Endothelial cell of umbilical vein (primary cell): ENCODE measurements at regions of chr6 and their contacts with region 1.

Region 1: GRCh38 chr6:12313992-12314805 is 24.0 kb downstream of the EDN1 start:
- DNase-seq: peak; percentile 89
- H3K4me3 ChIP-seq: no peak overlapping the region
- H3K27ac ChIP-seq: peak overlapping the region; percentile 77
- H3K4me1 ChIP-seq: peaks cover 23% of the 10 kb centered on the region
- H3K27me3 ChIP-seq: no peaks in the 10 kb centered on the region
- CTCF ChIP-seq: no peak
- POLR2A ChIP-seq: no peak

Region 2: GRCh38 chr6:12324514-12325147 is 10.4 kb after region 1 on chr6:
- CTCF ChIA-PET with region 1: interaction called, 13 read pairs
- POLR2A ChIA-PET with region 1: interaction called, 3 read pairs
- dilution Hi-C with region 1: no loop called
- intact Hi-C with region 1: loop called (anchors 1 kb)
- DNase-seq: no peak
- H3K4me3 ChIP-seq: no peak overlapping the region
- H3K27ac ChIP-seq: peak overlapping the region; percentile 60
- H3K4me1 ChIP-seq: peaks cover 17% of the 10 kb centered on the region
- H3K27me3 ChIP-seq: no peaks in the 10 kb centered on the region
- CTCF ChIP-seq: no peak
- POLR2A ChIP-seq: peak; percentile 40

Region 3: GRCh38 chr6:12395898-12396297 is 81.7 kb after region 1 on chr6:
- CTCF ChIA-PET with region 1: interaction called, 4 read pairs
- POLR2A ChIA-PET with region 1: no interaction called
- dilution Hi-C with region 1: no loop called
- intact Hi-C with region 1: loop called (anchors 2 kb)
- DNase-seq: peak; percentile 47
- H3K4me3 ChIP-seq: no peak overlapping the region
- H3K27ac ChIP-seq: no peak overlapping the region
- H3K4me1 ChIP-seq: peaks cover 26% of the 10 kb centered on the region
- H3K27me3 ChIP-seq: no peaks in the 10 kb centered on the region
- CTCF ChIP-seq: no peak
- POLR2A ChIP-seq: no peak